IMR-90 (cell line): ENCODE measurements at regions of chr4 and their contacts with region 1.

Region 1: GRCh38 chr4:81351654-81352445 is 119.9 kb downstream of the RASGEF1B start:
- DNase-seq: peak; percentile 78
- ATAC-seq: peak; percentile 79
- H3K4me3 ChIP-seq: no peak overlapping the region
- H3K27ac ChIP-seq: no peak overlapping the region
- H3K4me1 ChIP-seq: peaks cover 4% of the 10 kb centered on the region
- H3K27me3 ChIP-seq: no peaks in the 10 kb centered on the region
- CTCF ChIP-seq: peak; percentile 91
- POLR2A ChIP-seq: no peak
- RAD21 ChIP-seq: peak; percentile 81

Region 2: DNA sequence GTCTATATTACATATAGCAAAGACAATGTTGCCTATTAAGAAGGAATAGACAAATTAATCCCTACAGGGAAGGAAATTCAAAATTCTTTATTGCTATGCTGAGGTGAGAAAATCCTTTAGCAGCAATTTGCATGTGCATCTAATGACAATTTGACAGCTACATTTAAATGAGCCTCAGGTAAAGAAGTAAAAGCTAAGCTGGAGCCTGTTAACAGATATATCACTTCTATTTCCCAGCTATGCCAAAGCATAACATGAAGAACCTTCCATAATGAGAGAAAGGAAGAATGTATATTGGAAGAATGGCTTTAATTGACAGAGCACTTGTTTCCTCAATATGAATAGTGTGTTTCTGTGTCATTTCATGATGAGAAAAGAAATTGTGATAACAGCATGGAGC is 249.7 kb before region 1 on chr4:
- CTCF ChIA-PET with region 1: interaction called, 10 read pairs
- POLR2A ChIA-PET with region 1: no interaction called
- dilution Hi-C with region 1: no loop called
- in situ Hi-C with region 1: no loop called
- intact Hi-C with region 1: no loop called
- DNase-seq: no peak
- ATAC-seq: no peak
- H3K4me3 ChIP-seq: no peak overlapping the region
- H3K27ac ChIP-seq: no peak overlapping the region
- H3K4me1 ChIP-seq: no peaks in the 10 kb centered on the region
- H3K27me3 ChIP-seq: no peaks in the 10 kb centered on the region
- CTCF ChIP-seq: no peak
- POLR2A ChIP-seq: no peak
- RAD21 ChIP-seq: no peak

Region 3: DNA sequence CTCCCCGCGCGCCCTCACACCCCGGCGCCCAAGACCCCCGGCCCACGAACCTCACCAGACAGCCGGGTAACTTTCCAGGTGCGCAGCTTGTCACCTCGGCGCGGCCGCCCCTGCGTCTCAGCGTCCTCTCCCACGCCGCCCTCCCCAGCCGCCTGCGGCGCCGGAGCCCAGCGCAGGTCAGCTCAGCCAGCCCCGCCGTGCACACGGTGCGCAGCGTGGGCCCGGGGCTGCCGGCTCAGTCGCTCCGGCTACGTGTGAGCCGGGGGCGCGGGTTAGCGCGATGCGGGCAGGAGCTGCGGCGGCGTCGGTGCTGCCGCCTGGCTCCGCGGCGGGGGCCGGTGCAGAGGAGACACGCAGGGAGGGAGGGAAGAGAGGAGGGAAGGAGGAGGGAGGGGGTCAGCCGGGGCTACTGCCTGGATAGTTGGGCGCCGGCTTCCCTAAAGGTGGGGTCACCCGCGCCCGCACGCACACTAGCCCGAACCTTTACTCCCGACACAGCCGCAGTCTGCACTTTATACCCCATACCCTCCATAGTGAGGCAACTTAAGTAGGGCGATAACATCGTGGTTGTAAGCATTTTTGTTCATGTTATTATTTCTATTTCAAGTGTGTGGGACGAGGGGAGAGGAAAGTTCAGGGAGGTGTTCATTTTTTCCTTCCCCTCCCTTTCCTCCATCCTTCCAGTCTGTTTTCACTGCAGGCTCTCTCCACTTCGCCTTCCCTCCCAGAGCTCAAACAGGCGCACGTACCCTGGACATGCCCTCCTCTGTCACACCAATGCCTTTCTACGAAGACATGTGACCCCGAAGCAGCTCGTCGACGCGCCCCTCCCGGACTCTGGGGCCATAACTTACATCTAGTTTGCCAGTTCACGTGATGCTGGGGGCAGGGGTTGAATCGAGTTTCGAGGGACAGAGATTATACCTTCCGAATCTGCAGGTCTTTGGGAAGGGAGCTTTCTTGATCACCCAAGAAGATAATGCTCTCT is 136.7 kb before region 1 on chr4 and contains the start of gene PRKG2:
- CTCF ChIA-PET with region 1: interaction called, 3 read pairs
- POLR2A ChIA-PET with region 1: no interaction called
- dilution Hi-C with region 1: no loop called
- in situ Hi-C with region 1: no loop called
- intact Hi-C with region 1: loop called (anchors 1 kb)
- DNase-seq: no peak
- ATAC-seq: peak; percentile 76
- H3K4me3 ChIP-seq: peak within 1 kb of the TSS; percentile 64
- H3K27ac ChIP-seq: peak within 1 kb of the TSS; percentile 82
- H3K4me1 ChIP-seq: peaks cover 2% of the 10 kb centered on the region; the same call in 1 of the 2 replicates
- H3K27me3 ChIP-seq: peaks cover 2% of the 10 kb centered on the region; the same call in 1 of the 2 replicates
- CTCF ChIP-seq: no peak
- POLR2A ChIP-seq: no peak
- RAD21 ChIP-seq: no peak
- total RNA-seq, gene PRKG2: 2.0 and 2.2 TPM in 2 replicates